ENCODE measurements at regions of chr1 and their contacts with region 1.

Region 1: GRCh38 chr1:247373721-247374141 is 42.1 kb upstream of the ZNF496 start:
- DNase-seq: peak; percentile 51
- H3K4me3 Mint-ChIP-seq: no peak overlapping the region
- H3K27ac Mint-ChIP-seq: no peak overlapping the region
- H3K4me1 Mint-ChIP-seq: peaks cover 5% of the 10 kb centered on the region
- H3K27me3 Mint-ChIP-seq: peaks cover 17% of the 10 kb centered on the region

Region 2: DNA sequence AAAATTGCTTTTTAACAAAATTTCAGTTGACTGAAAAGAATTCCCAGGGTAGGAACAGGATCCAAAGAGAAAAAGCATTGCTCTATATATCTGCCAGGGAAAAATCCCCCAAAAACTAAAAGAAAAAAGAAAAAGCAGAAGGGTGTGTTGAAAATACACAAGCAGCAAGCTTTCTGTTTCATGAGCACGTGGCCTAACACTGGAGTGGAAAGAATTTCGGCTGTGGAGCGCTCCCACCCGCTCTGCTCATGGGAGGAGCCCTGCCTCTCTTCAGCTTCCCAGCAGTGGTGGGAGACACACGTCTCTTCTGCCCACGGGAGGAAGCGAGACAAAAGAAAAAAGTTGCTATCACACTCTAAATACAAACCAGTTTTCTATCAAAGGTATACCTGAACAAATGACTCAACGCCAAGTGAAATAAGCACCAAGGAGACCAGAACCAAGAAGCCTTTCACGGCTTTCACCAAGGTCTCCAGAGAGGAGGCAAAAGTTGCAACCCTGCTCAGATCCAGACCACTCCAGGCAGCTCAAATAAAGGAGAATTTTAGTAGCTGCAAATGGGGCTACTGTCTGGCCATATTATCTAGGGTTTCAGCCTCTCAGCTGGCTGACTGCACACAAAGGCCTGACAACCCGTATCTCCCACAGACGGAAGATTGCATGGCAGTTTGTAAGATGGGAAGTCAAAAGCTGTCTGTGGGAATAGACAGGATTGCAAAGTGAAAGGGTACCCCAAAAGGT is 12.6 kb before region 1 on chr1:
- CTCF ChIA-PET with region 1: interaction called, 10 read pairs
- POLR2A ChIA-PET with region 1: no interaction called
- DNase-seq: no peak
- H3K4me3 Mint-ChIP-seq: no peak overlapping the region
- H3K27ac Mint-ChIP-seq: no peak overlapping the region
- H3K4me1 Mint-ChIP-seq: no peaks in the 10 kb centered on the region
- H3K27me3 Mint-ChIP-seq: peaks cover 10% of the 10 kb centered on the region

Region 3: DNA sequence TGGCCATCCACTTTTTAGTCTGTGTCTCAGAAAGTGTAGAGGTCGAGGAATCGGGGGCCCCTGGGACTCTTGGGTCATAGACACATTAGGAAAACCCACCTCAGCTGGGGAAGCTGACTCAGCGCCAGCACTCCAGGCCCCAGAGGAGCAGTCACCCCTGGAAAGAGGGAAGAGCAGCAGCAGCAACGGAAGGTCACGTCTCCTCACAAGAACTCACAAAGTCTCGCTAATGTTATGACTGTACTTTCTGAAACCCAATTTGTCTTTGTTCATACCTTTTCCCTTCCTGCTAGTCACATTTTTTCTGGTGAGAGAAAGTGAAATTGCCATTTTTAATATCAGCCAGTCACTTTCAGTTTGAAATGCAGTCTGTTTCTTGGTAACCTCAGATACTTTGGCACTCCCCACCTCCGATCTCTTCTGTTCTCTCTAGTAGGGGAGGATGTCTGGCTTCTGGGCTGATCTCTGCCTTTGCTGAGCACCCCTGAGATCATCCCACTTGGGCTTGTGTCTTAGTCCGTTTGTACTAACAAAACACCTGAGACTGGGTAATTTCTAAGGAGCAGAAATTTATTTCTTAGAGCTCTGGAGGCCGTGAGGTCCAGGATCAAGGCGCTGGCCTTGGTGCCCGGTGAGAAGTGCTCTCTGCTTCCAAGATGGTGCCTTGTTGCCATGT is 36.3 kb after region 1 on chr1:
- CTCF ChIA-PET with region 1: interaction called, 11 read pairs
- POLR2A ChIA-PET with region 1: no interaction called
- DNase-seq: no peak
- H3K4me3 Mint-ChIP-seq: peak overlapping the region; percentile 40
- H3K27ac Mint-ChIP-seq: no peak overlapping the region
- H3K4me1 Mint-ChIP-seq: peaks cover 37% of the 10 kb centered on the region
- H3K27me3 Mint-ChIP-seq: peaks cover 59% of the 10 kb centered on the region

Region 4: DNA sequence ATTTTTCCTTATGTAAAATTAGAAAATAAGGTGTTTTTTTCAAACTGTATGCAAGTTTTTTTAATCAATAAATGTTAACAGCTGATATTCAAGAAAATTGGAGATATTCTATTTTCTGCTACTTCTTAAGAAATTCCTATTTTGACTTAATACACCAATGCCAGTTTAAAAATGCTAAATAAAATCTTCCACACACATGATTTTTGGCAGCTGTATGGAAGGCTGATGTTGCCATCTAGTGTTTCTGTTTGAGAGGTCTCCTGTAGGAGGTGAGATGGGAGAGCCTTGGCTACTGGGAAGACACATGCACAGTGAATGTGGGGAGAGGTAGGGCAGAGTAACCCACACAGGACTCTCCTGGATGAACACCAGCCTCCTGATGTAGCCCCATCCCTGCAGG is 113.3 kb after region 1 on chr1:
- CTCF ChIA-PET with region 1: interaction called, 42 read pairs
- POLR2A ChIA-PET with region 1: interaction called, 3 read pairs
- DNase-seq: peak; percentile 23
- H3K4me3 Mint-ChIP-seq: no peak overlapping the region
- H3K27ac Mint-ChIP-seq: no peak overlapping the region
- H3K4me1 Mint-ChIP-seq: no peaks in the 10 kb centered on the region
- H3K27me3 Mint-ChIP-seq: peaks cover 8% of the 10 kb centered on the region

Measured in activated CD4-positive, alpha-beta memory T cell treated with anti-CD3 and anti-CD28 coated beads, Interleukin-2, amount 10 ng/mL, durations not matched to agents 7 days and 5 days (primary cell).